A673 (cell line): ENCODE measurements at regions of chr18 and their contacts with region 1.

Region 1: GRCh38 chr18:62790871-62791772 is 75.8 kb downstream of the PHLPP1 start:
- DNase-seq: no peak
- H3K4me3 ChIP-seq: no peak overlapping the region
- H3K27ac ChIP-seq: no peak overlapping the region
- H3K4me1 ChIP-seq: peaks cover 16% of the 10 kb centered on the region
- H3K27me3 ChIP-seq: no peaks in the 10 kb centered on the region
- CTCF ChIP-seq: no peak

Region 2: DNA sequence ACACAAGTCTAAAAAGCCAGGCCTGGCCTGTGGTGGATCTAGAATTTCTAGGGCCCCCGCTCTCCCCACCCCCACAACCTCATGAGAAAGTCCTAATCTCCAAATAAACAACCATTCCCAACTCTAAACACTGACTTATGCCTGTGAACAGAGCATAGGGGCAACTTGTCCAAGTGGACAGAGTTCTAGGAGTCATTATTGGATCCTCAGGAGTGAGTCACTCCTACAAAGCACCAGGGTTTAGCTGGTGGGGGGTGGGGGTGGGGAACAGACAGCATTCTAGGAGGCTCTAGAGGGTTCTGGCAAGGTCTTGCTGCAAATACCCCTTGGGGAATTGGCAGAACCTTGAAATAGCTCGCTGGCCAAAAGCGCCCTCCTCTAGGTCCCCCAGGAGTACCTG is 185.0 kb before region 1 on chr18:
- CTCF ChIA-PET with region 1: no interaction called
- POLR2A ChIA-PET with region 1: no interaction called
- intact Hi-C with region 1: loop called (anchors 10 kb)
- DNase-seq: no peak
- H3K4me3 ChIP-seq: no peak overlapping the region
- H3K27ac ChIP-seq: no peak overlapping the region
- H3K4me1 ChIP-seq: no peaks in the 10 kb centered on the region
- H3K27me3 ChIP-seq: no peaks in the 10 kb centered on the region
- CTCF ChIP-seq: no peak